Activated T-helper 1 cell treated with anti-CD3 and anti-CD28 coated beads, Interleukin-12 subunit alpha, Interleukin-12 subunit beta, Interleukin-2, Interleukin-4 antibody, amounts not matched to agents 30 ng/mL and 10 ng/mL and 1 ng/mL, durations not matched to agents 14 hours and 24 hours and 36 hours (primary cell): ENCODE measurements at regions of chr10 and their contacts with region 1.

Region 1: GRCh38 chr10:100562008-100562711 is 26.4 kb downstream of the HIF1AN start:
- DNase-seq: peak; percentile 72
- H3K4me3 Mint-ChIP-seq: no peak overlapping the region
- H3K27ac Mint-ChIP-seq: no peak overlapping the region
- H3K4me1 Mint-ChIP-seq: peaks cover 6% of the 10 kb centered on the region
- H3K27me3 Mint-ChIP-seq: peaks cover 34% of the 10 kb centered on the region

Region 2: GRCh38 chr10:100245484-100246220 is 316.5 kb before region 1 on chr10:
- intact Hi-C with region 1: no loop called
- DNase-seq: no peak
- H3K4me3 Mint-ChIP-seq: no peak overlapping the region
- H3K27ac Mint-ChIP-seq: no peak overlapping the region
- H3K4me1 Mint-ChIP-seq: peaks cover 2% of the 10 kb centered on the region
- H3K27me3 Mint-ChIP-seq: no peaks in the 10 kb centered on the region

Region 3: DNA sequence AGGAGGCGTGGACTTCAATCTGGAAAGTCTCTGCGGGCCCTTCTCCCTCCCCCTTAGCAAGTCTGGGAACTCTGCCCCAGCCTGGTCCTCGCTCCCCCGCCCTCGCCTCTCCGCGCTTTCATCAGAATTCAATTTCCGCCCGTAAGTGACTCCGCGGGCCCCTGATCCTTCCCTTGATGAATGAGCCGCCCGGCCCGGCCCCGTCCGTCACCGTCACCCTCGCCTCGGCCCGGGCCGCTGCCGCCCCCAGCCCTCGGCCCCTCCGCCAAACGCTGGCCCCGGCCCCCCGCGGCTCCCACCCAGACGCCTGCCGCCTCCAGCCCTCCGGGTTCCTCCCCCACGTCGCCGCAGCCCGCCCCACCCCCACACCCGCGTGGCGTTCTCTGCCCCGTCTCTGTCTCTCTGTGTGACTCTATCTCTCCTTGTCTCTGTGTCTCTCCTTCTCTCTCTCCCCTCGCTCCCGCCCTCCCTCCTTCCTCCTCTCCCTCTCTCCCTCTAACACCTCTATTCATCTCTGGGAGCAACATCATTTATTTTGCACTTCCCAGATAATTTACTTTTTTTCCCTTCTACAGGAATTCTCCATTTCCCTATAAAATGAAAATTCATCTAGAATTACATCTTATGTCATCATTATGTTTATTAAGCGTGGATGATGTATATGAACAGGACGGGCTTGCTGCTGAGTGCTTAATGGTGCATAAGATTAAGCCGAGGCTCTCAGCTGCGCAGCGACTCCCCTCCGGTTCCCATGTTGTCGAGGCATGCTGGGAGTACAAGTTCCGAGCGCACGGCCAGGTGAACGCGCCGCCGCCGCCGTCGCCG is 92.0 kb after region 1 on chr10:
- intact Hi-C with region 1: loop called (anchors 5 kb)
- DNase-seq: no peak
- H3K4me3 Mint-ChIP-seq: peak overlapping the region; percentile 57
- H3K27ac Mint-ChIP-seq: no peak overlapping the region
- H3K4me1 Mint-ChIP-seq: peaks cover 20% of the 10 kb centered on the region
- H3K27me3 Mint-ChIP-seq: peaks cover 63% of the 10 kb centered on the region

Region 4: DNA sequence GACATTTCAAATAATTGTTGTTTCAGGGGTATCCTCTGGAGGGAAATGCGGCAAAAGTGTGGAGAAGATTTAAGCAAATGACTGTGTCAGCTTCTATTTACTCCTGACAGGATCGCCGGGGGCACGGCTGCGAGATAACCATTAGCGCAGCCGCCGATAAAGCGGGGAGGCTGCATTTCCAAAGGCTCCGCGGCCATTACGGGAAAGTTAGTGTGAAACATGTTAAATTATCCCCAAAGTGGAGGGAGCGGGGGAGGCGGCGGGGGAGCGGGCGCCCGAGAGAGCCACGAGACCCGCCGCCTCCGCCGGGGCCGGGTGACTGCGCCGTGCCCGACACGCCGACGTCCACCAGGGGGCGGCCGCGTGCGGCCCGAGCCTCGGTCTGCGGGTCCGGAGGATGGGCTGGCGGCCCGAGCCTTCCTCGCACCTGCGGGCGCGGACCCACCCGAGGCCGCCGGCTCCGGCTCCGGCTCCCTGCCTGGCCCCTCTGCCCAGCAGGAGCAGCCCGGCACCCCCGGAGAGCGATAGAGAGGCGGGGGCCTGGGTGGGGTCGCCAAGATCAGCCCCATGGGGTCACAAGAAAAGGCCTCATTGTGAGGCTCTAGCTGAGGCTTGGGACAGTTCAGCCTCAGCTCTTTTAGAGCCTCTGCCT is 108.8 kb after region 1 on chr10:
- intact Hi-C with region 1: loop called (anchors 1 kb)
- DNase-seq: peak; percentile 57
- H3K4me3 Mint-ChIP-seq: peak overlapping the region; percentile 60
- H3K27ac Mint-ChIP-seq: no peak overlapping the region
- H3K4me1 Mint-ChIP-seq: peaks cover 9% of the 10 kb centered on the region
- H3K27me3 Mint-ChIP-seq: peaks cover 69% of the 10 kb centered on the region

Region 5: GRCh38 chr10:100728928-100729861 is 167.0 kb after region 1 on chr10:
- intact Hi-C with region 1: loop called (anchors 5 kb)
- DNase-seq: no peak
- H3K4me3 Mint-ChIP-seq: no peak overlapping the region
- H3K27ac Mint-ChIP-seq: no peak overlapping the region
- H3K4me1 Mint-ChIP-seq: peaks cover 24% of the 10 kb centered on the region
- H3K27me3 Mint-ChIP-seq: peaks cover 89% of the 10 kb centered on the region

Region 6: GRCh38 chr10:100872034-100872791 is 310.1 kb after region 1 on chr10:
- intact Hi-C with region 1: loop called (anchors 1 kb)
- DNase-seq: peak; percentile 28
- H3K4me3 Mint-ChIP-seq: no peak overlapping the region
- H3K27ac Mint-ChIP-seq: no peak overlapping the region
- H3K4me1 Mint-ChIP-seq: no peaks in the 10 kb centered on the region
- H3K27me3 Mint-ChIP-seq: peaks cover 11% of the 10 kb centered on the region

Region 7: GRCh38 chr10:101012525-101013364 is 450.6 kb after region 1 on chr10:
- intact Hi-C with region 1: loop called (anchors 5 kb)
- DNase-seq: peak; percentile 58
- H3K4me3 Mint-ChIP-seq: no peak overlapping the region
- H3K27ac Mint-ChIP-seq: peak overlapping the region; percentile 64
- H3K4me1 Mint-ChIP-seq: peaks cover 27% of the 10 kb centered on the region
- H3K27me3 Mint-ChIP-seq: peaks cover 26% of the 10 kb centered on the region